ENCODE measurements at regions of chr2 and their contacts with region 1.

Region 1: GRCh38 chr2:150376565-150377335 is 110.7 kb downstream of the RND3 start:
- DNase-seq: peak; percentile 34
- ATAC-seq: peak; percentile 51
- H3K4me3 ChIP-seq: no peak overlapping the region
- H3K27ac ChIP-seq: no peak overlapping the region
- H3K4me1 ChIP-seq: no peaks in the 10 kb centered on the region; the same call in 1 of the 2 replicates
- H3K27me3 ChIP-seq: no peaks in the 10 kb centered on the region
- CTCF ChIP-seq: no peak
- POLR2A ChIP-seq: no peak
- RAD21 ChIP-seq: no peak

Region 2: GRCh38 chr2:149782572-149782971 is 594.2 kb before region 1 on chr2:
- CTCF ChIA-PET with region 1: no interaction called
- POLR2A ChIA-PET with region 1: no interaction called
- dilution Hi-C with region 1: no loop called
- in situ Hi-C with region 1: no loop called
- intact Hi-C with region 1: no loop called
- DNase-seq: peak; percentile 55
- ATAC-seq: no peak
- H3K4me3 ChIP-seq: no peak overlapping the region
- H3K27ac ChIP-seq: no peak overlapping the region
- H3K4me1 ChIP-seq: no peaks in the 10 kb centered on the region
- H3K27me3 ChIP-seq: no peaks in the 10 kb centered on the region
- CTCF ChIP-seq: no peak
- POLR2A ChIP-seq: no peak
- RAD21 ChIP-seq: no peak

Region 3: GRCh38 chr2:150012986-150013385 is 363.8 kb before region 1 on chr2:
- CTCF ChIA-PET with region 1: no interaction called
- POLR2A ChIA-PET with region 1: no interaction called
- dilution Hi-C with region 1: no loop called
- in situ Hi-C with region 1: no loop called
- intact Hi-C with region 1: no loop called
- DNase-seq: peak; percentile 36
- ATAC-seq: no peak
- H3K4me3 ChIP-seq: no peak overlapping the region
- H3K27ac ChIP-seq: no peak overlapping the region
- H3K4me1 ChIP-seq: no peaks in the 10 kb centered on the region
- H3K27me3 ChIP-seq: no peaks in the 10 kb centered on the region
- CTCF ChIP-seq: no peak
- POLR2A ChIP-seq: no peak
- RAD21 ChIP-seq: no peak

Region 4: DNA sequence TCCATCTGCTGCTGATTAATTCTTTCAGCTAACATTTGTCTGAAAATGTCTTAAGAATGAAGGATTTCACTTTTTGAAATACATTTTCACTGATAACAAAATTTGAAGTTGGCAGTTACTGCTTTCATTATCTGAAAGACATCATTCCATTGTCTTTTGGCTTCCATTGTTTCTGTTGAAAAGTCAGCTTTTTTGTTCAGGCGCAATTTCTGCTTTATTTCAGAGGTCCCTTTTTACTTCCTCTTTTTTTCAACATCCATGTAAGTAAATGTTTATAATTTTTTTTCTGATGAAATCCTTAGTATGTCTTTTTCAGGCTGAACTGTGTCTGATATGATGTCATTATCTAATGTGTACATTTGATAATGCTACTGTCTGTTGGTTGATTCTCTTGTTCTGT is 73.5 kb before region 1 on chr2:
- CTCF ChIA-PET with region 1: no interaction called
- POLR2A ChIA-PET with region 1: no interaction called
- dilution Hi-C with region 1: no loop called
- in situ Hi-C with region 1: no loop called
- intact Hi-C with region 1: loop called (anchors 10 kb)
- DNase-seq: no peak
- ATAC-seq: no peak
- H3K4me3 ChIP-seq: no peak overlapping the region
- H3K27ac ChIP-seq: no peak overlapping the region
- H3K4me1 ChIP-seq: no peaks in the 10 kb centered on the region
- H3K27me3 ChIP-seq: no peaks in the 10 kb centered on the region
- CTCF ChIP-seq: no peak
- POLR2A ChIP-seq: no peak
- RAD21 ChIP-seq: no peak